HepG2 (cell line): ENCODE measurements at regions of chr7 and their contacts with region 1.

Region 1: GRCh38 chr7:50851891-50852290 is 69.2 kb upstream of the GRB10 start:
- DNase-seq: no peak
- ATAC-seq: no peak
- H3K4me3 ChIP-seq: no peak overlapping the region
- H3K27ac ChIP-seq: no peak overlapping the region
- H3K4me1 ChIP-seq: no peaks in the 10 kb centered on the region
- H3K27me3 ChIP-seq: no peaks in the 10 kb centered on the region; a peak in 1 of 5 replicates
- CTCF ChIP-seq: no peak
- EP300 ChIP-seq: no peak
- POLR2A ChIP-seq: no peak
- RAD21 ChIP-seq: no peak

Region 2: DNA sequence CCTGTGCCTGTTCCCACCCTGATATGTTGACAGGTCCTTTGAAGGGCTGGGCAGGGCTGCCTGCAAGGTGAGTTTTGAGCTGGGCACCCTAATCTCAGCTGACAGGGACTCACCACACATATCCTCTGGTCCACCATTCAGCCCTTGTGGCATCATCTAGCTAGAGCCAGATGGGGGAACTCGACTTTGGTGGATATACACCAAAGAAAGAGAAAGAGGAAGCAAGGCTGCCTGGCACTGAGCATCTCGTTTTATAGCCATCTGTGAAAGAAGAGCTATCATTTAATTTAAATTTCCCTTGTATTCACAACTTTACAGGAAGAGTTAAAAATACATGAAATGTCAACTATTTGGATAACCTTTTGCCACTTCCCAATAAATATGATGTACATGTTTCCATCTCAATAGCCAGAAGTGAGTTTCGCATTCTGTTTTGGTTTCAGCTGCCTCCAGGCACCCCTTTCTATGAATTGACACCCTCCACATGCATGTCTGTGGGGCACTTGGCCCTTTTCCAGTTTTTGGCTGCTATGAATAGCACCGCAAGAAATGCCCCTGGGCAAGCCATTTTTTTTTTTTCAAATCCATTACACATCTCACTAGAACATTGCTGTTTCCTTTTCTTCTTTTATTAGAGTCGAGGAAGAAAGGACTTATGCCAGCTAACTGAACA is 46.3 kb before region 1 on chr7:
- CTCF ChIA-PET with region 1: no interaction called
- POLR2A ChIA-PET with region 1: no interaction called
- in situ Hi-C with region 1: no loop called
- intact Hi-C with region 1: loop called (anchors 2 kb)
- DNase-seq: no peak
- ATAC-seq: no peak
- H3K4me3 ChIP-seq: no peak overlapping the region
- H3K27ac ChIP-seq: no peak overlapping the region
- H3K4me1 ChIP-seq: peaks cover 8% of the 10 kb centered on the region; the same call in 1 of the 2 replicates
- H3K27me3 ChIP-seq: no peaks in the 10 kb centered on the region
- CTCF ChIP-seq: no peak
- EP300 ChIP-seq: no peak
- POLR2A ChIP-seq: no peak
- RAD21 ChIP-seq: no peak

Region 3: GRCh38 chr7:50914460-50914859 is 62.6 kb after region 1 on chr7:
- CTCF ChIA-PET with region 1: no interaction called
- POLR2A ChIA-PET with region 1: no interaction called
- in situ Hi-C with region 1: no loop called
- intact Hi-C with region 1: no loop called
- DNase-seq: peak; percentile 6
- ATAC-seq: no peak
- H3K4me3 ChIP-seq: no peak overlapping the region
- H3K27ac ChIP-seq: no peak overlapping the region
- H3K4me1 ChIP-seq: no peaks in the 10 kb centered on the region
- H3K27me3 ChIP-seq: no peaks in the 10 kb centered on the region; a peak in 1 of 5 replicates
- CTCF ChIP-seq: no peak
- EP300 ChIP-seq: no peak
- POLR2A ChIP-seq: no peak
- RAD21 ChIP-seq: no peak